ENCODE measurements at regions of chr15 and their contacts with region 1.

Region 1: DNA sequence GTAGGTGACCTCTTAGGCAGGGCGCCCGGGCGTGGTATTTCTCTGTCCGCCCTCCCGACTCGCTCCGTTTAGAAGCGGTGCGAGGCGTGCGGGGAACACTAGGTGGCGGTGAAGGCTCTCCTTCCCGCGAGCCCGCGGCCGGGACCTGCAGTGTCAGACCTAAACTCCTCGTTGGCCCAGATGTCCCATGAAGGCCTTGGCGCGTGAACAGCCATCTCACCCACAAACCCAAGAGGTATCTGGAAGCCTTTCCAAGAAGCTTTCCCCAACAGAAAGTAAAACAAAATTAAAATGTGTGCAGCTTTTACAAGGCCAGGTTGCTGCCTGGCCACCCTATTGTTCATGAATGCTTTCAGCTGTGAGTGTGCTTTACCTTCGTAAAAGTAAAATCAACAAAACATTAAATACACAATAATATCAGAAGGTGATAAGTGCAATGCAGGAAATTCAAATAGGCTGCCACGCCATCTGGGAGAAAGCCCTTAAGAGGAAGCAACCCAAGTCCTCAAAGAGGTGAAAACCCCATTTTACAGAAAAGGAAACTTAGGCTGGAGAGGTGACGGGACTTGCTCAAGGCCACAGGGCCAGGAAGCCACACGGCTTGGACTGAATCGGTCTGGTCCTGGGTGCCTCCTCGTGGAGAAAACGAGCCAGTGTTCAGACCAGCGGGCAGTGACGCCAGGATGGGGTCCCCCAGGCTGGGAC is 120.3 kb downstream of the ETFA start:
- DNase-seq: peak; percentile 67
- ATAC-seq: peak; percentile 81
- H3K4me3 ChIP-seq: peak overlapping the region; percentile 19 to 51 (median 27); a peak in 5 of 6 replicates
- H3K27ac ChIP-seq: no peak overlapping the region
- H3K4me1 ChIP-seq: peaks cover 43% of the 10 kb centered on the region
- H3K27me3 ChIP-seq: peaks cover 1 to 10% of the 10 kb centered on the region in 2 experiments; a peak in 4 of 5 replicates
- CTCF ChIP-seq: peak; percentile 98
- EP300 ChIP-seq: no peak
- POLR2A ChIP-seq: no peak
- RAD21 ChIP-seq: peak; percentile 84

Region 2: DNA sequence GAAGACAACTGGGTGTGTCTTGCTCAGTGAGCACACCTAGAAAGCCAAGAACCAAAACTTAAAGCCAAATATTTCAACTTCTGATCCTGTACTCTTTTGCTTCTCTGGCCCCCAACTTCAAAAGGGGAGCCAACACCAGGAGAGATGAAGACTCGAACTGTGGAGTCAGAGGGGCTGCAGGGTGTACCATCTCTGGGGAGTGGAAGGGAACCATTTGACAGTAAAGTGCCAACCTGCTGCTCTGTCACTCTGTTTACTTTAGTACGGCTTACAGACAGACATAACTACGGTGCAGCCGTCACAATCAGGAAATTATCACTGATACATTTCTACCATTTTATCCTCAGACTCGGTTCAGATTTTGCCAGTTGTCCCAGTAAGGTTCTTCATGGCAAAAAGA is 285.8 kb before region 1 on chr15:
- CTCF ChIA-PET with region 1: no interaction called
- POLR2A ChIA-PET with region 1: no interaction called
- in situ Hi-C with region 1: no loop called
- intact Hi-C with region 1: no loop called
- DNase-seq: no peak
- ATAC-seq: no peak
- H3K4me3 ChIP-seq: peak overlapping the region; percentile 14 to 57 (median 41); a peak in 5 of 6 replicates
- H3K27ac ChIP-seq: no peak overlapping the region
- H3K4me1 ChIP-seq: peaks cover 44% of the 10 kb centered on the region
- H3K27me3 ChIP-seq: no peaks in the 10 kb centered on the region; a peak in 1 of 5 replicates
- CTCF ChIP-seq: no peak
- EP300 ChIP-seq: no peak
- POLR2A ChIP-seq: no peak
- RAD21 ChIP-seq: no peak

Region 3: DNA sequence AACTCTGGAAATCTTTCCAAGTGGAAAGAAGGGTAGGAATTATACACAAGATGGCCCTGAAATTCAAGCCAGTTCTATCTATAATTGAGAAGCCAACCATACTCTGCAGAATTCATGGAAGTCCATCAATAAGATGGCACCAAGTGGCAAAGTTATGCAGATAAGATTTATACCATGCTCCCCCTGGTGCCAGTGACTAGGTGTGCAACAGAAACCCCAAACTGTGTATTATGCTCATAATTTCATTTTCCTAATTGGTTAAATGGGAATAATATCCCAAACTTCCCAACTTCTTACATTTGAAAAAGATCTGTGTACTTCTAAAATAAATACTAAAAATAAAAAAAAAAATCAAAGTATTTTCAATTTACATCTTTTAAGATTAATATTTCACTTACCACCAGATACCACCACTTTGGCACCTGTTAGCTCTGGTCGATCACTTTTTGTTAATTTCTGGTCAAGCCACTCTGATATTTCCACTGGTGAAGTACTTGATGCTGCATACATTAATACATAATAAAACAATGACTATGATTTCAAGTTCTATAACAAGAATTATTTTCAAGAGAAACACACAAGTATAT is 94.3 kb after region 1 on chr15:
- CTCF ChIA-PET with region 1: interaction called, 8 read pairs
- POLR2A ChIA-PET with region 1: no interaction called
- in situ Hi-C with region 1: no loop called
- intact Hi-C with region 1: loop called (anchors 10 kb)
- DNase-seq: peak; percentile 4
- ATAC-seq: peak; percentile 34; the same call in 1 of the 3 replicates
- H3K4me3 ChIP-seq: no peak overlapping the region
- H3K27ac ChIP-seq: no peak overlapping the region
- H3K4me1 ChIP-seq: peaks cover 17% of the 10 kb centered on the region
- H3K27me3 ChIP-seq: no peaks in the 10 kb centered on the region
- CTCF ChIP-seq: 0 out of 2 replicates have a peak, but pooled peaks have one; percentile 33
- EP300 ChIP-seq: no peak
- POLR2A ChIP-seq: no peak
- RAD21 ChIP-seq: no peak

Region 4: GRCh38 chr15:76330080-76330680 is 139.2 kb after region 1 on chr15:
- CTCF ChIA-PET with region 1: interaction called, 4 read pairs
- POLR2A ChIA-PET with region 1: interaction called, 5 read pairs
- in situ Hi-C with region 1: loop called (anchors 5 kb)
- intact Hi-C with region 1: loop called (anchors 5 kb)
- DNase-seq: peak; percentile 47
- ATAC-seq: peak; percentile 65
- H3K4me3 ChIP-seq: no peak overlapping the region
- H3K27ac ChIP-seq: no peak overlapping the region
- H3K4me1 ChIP-seq: peaks cover 35% of the 10 kb centered on the region
- H3K27me3 ChIP-seq: peaks cover 0 to 4% of the 10 kb centered on the region in 2 experiments; a peak in 2 of 5 replicates
- CTCF ChIP-seq: peak; percentile 75
- EP300 ChIP-seq: no peak
- POLR2A ChIP-seq: no peak
- RAD21 ChIP-seq: peak; percentile 52; the same call in 1 of the 2 replicates

Region 5: DNA sequence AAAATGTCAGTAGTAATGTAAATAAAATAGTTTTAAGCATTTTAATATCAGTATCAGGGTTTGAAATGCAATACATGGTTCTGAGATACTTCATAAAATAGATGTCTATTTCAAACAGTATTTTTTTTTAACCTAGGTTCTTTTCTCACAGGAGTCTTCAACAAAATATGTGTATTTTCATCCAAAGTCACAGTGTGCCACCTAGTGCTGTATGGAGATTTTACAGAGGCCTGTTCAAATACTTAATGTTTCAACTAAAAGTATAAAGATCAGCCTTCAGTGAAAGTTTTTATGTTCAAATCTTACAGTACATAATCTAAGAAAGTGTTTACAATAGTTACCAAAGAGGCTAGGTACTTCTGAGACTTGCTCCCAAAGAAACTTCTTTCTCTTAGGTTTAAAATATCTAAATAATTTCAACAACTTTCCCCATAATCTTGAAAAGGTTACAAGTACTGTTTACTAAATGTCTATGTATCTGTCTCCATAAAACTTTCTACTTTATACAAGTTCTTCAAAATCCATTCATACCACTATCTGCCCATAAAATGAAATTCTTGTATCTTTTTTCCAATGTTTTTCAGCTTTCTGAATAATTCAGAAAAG is 675.8 kb after region 1 on chr15:
- CTCF ChIA-PET with region 1: interaction called, 3 read pairs
- POLR2A ChIA-PET with region 1: no interaction called
- in situ Hi-C with region 1: loop called (anchors 10 kb)
- intact Hi-C with region 1: loop called (anchors 1 kb)
- DNase-seq: peak; percentile 34
- ATAC-seq: no peak
- H3K4me3 ChIP-seq: no peak overlapping the region
- H3K27ac ChIP-seq: no peak overlapping the region
- H3K4me1 ChIP-seq: no peaks in the 10 kb centered on the region
- H3K27me3 ChIP-seq: no peaks in the 10 kb centered on the region
- CTCF ChIP-seq: peak; percentile 51
- EP300 ChIP-seq: no peak
- POLR2A ChIP-seq: no peak
- RAD21 ChIP-seq: peak; percentile 43; the same call in 1 of the 2 replicates

Measured in HepG2 (cell line).